ENCODE measurements at regions of chr10 and their contacts with region 1.

Region 1: GRCh38 chr10:113496111-113497109 is 56.4 kb upstream of the HABP2 start:
- DNase-seq: peak in 1 of 2 donors; percentile 50
- H3K4me3 ChIP-seq: no peak overlapping the region
- H3K27ac ChIP-seq: peak overlapping the region; percentile 89 to 90
- H3K4me1 ChIP-seq: peaks cover 5 to 14% of the 10 kb centered on the region in 2 donors
- H3K27me3 ChIP-seq: no peaks in the 10 kb centered on the region
- CTCF ChIP-seq: no peak
- POLR2A ChIP-seq: no peak

Region 2: GRCh38 chr10:113476673-113477072 is 19.7 kb before region 1 on chr10:
- intact Hi-C with region 1: loop called (anchors 1 kb)
- DNase-seq: no peak
- H3K4me3 ChIP-seq: peak overlapping the region in 2 of 3 donors; percentile 21 to 34
- H3K27ac ChIP-seq: peak overlapping the region; percentile 84 to 91
- H3K4me1 ChIP-seq: peaks cover 6 to 16% of the 10 kb centered on the region in 2 donors
- H3K27me3 ChIP-seq: no peaks in the 10 kb centered on the region
- CTCF ChIP-seq: no peak
- POLR2A ChIP-seq: no peak

Region 3: GRCh38 chr10:113532724-113533123 is 36.3 kb after region 1 on chr10:
- intact Hi-C with region 1: loop called (anchors 1 kb)
- DNase-seq: no peak
- H3K4me3 ChIP-seq: no peak overlapping the region
- H3K27ac ChIP-seq: no peak overlapping the region
- H3K4me1 ChIP-seq: no peaks in the 10 kb centered on the region
- H3K27me3 ChIP-seq: no peaks in the 10 kb centered on the region
- CTCF ChIP-seq: no peak
- POLR2A ChIP-seq: no peak

Measured in breast epithelium (tissue), 4 donors.